ENCODE measurements at regions of chr12 and their contacts with region 1.

Region 1: GRCh38 chr12:13652105-13652504 is 329.3 kb downstream of the GRIN2B start:
- DNase-seq: no peak
- ATAC-seq: no peak
- H3K4me3 Mint-ChIP-seq: no peak overlapping the region
- H3K27ac Mint-ChIP-seq: no peak overlapping the region
- H3K4me1 Mint-ChIP-seq: no peaks in the 10 kb centered on the region
- H3K27me3 Mint-ChIP-seq: no peaks in the 10 kb centered on the region
- CTCF ChIP-seq: no peak

Region 2: GRCh38 chr12:13627536-13627935 is 24.6 kb before region 1 on chr12:
- CTCF ChIA-PET with region 1: no interaction called
- POLR2A ChIA-PET with region 1: interaction called, 12 read pairs
- intact Hi-C with region 1: no loop called
- DNase-seq: no peak
- ATAC-seq: no peak
- H3K4me3 Mint-ChIP-seq: no peak overlapping the region
- H3K27ac Mint-ChIP-seq: no peak overlapping the region
- H3K4me1 Mint-ChIP-seq: no peaks in the 10 kb centered on the region
- H3K27me3 Mint-ChIP-seq: peaks cover 6% of the 10 kb centered on the region
- CTCF ChIP-seq: no peak

Region 3: DNA sequence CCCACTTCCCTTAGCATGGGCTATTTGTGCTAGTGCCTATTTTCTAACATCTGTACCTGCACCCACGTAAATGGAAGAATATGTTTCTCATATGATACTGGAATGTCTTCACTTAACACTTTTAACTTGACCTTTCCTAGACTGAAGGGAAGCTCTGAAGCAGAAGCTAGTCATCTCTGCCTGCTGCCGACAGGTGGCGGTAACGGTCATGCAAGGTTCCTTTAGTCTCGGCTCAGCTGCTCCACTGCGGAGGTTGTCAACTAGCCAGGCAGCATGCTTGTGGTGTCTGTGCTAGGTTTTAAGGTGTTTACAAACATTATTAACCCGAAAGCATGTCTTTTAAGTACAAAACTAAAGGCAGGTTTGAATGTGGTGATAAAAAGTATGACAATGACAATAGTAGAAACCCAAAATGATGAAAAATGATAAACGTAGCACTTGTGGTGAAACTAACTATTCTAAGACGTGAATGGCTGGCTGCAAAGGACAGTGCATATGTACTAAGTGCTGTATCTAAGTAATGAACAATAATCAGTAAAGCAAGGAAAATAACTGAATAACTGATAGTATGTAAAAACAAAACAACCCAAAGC is 212.1 kb after region 1 on chr12:
- CTCF ChIA-PET with region 1: no interaction called
- POLR2A ChIA-PET with region 1: no interaction called
- intact Hi-C with region 1: no loop called
- DNase-seq: peak; percentile 45
- ATAC-seq: peak; percentile 79
- H3K4me3 Mint-ChIP-seq: no peak overlapping the region
- H3K27ac Mint-ChIP-seq: no peak overlapping the region
- H3K4me1 Mint-ChIP-seq: no peaks in the 10 kb centered on the region
- H3K27me3 Mint-ChIP-seq: peaks cover 29% of the 10 kb centered on the region
- CTCF ChIP-seq: peak; percentile 80